ENCODE measurements at regions of chr6 and their contacts with region 1.

Region 1: DNA sequence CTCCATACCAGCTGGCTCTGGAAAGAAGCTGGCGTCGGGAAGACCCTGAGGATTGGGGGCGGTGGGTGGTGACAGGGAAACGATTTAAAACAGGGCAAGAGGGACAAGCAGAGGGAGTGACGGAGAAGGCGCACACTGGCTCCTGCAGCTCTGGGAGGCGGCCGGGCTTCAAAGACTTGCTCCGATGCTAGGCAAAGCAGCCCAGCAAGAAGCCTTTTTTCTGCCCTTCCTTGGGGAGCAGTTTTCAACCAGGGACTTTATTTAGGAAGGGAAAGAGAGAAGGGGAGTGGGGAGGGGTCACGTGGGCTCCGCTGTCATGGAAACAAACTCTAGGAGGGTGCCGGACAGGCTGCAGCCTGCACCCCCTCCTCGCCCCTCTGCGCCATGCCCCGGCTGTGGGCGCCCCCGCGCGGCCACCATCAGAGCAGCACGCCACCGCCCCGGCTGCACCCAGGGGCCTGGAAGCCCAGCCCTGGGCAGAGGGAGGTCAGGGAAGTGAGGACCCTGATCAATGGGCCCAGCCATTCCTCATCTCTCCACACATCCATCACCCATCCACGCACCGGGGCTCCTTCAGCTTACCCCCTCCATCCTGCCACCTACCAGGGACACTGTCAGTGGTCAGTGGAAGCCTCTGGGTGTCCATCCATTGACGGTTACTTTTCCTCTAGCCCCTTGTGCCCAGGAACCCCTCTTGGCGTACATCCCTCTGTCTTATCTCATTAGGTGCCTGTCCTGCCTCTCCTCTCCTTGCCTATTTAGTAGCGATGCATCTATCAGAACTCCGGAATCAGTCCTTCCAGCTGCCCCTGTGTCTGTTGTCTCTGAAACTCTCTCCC is 66.6 kb upstream of the CCDC167 start:
- DNase-seq: peak; percentile 64 to 74 (median 69)
- H3K4me3 ChIP-seq: peak overlapping the region in 1 of 2 donors; percentile 43
- H3K4me3 Mint-ChIP-seq: peak overlapping the region; percentile 46 to 77 (median 66)
- H3K27ac ChIP-seq: no peak overlapping the region
- H3K27ac Mint-ChIP-seq: peak overlapping the region in 6 of 7 donors; percentile 31 to 87 (median 70)
- H3K4me1 ChIP-seq: no peaks in the 10 kb centered on the region
- H3K4me1 Mint-ChIP-seq: peaks cover 0 to 10% (median 5%) of the 10 kb centered on the region in 4 donors
- H3K27me3 ChIP-seq: no peaks in the 10 kb centered on the region
- H3K27me3 Mint-ChIP-seq: no peaks in the 10 kb centered on the region

Region 2: DNA sequence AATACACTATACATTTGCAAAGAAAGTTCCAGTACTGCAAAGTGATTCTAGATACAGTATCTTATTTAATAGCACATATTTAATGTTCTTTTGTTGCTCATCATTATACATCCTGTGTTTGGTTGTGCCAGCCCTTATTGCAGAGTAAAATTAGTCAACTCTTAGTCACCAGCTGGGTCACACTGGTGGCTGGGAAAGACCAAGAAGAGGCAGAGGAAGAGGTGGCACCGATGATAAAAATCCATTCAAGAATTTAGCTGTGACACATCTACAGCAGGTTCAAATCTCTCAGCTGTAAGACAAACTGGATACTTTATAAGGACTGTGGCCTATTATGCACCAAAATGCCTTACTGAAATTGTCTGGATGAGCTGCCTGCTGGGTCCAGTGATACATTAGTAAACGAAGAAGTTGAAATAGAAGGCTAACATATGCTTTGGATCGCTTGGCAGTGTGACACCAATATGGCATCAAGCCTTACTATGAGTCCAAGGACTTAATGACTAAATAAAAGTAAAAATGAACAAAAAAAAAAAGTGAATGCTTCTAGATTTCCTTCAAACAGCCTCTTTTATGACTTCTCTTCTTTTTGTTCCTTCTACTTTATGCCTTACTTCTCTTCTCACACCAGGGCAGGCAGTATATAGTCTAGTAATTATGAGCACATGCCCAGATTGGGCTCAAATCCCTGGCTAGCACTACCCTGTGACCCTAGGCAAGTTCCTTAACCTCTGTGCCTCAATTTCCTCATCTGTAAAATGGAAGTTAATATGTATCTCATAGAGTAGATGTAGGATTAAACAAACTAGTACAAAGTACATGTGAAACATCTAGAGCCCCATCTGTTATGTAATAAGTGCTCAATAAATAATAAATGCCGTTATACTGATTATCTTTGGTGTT is 241.9 kb before region 1 on chr6:
- CTCF ChIA-PET with region 1: interaction called, 11 read pairs
- POLR2A ChIA-PET with region 1: no interaction called
- intact Hi-C with region 1: loop called (anchors 2 kb)
- DNase-seq: no peak
- H3K4me3 ChIP-seq: no peak overlapping the region
- H3K4me3 Mint-ChIP-seq: no peak overlapping the region
- H3K27ac ChIP-seq: no peak overlapping the region
- H3K27ac Mint-ChIP-seq: peak overlapping the region in 4 of 7 donors; percentile 10 to 70 (median 44)
- H3K4me1 ChIP-seq: no peaks in the 10 kb centered on the region
- H3K4me1 Mint-ChIP-seq: peaks cover 3 to 4% (median 4%) of the 10 kb centered on the region in 4 donors
- H3K27me3 ChIP-seq: no peaks in the 10 kb centered on the region
- H3K27me3 Mint-ChIP-seq: no peaks in the 10 kb centered on the region

Region 3: DNA sequence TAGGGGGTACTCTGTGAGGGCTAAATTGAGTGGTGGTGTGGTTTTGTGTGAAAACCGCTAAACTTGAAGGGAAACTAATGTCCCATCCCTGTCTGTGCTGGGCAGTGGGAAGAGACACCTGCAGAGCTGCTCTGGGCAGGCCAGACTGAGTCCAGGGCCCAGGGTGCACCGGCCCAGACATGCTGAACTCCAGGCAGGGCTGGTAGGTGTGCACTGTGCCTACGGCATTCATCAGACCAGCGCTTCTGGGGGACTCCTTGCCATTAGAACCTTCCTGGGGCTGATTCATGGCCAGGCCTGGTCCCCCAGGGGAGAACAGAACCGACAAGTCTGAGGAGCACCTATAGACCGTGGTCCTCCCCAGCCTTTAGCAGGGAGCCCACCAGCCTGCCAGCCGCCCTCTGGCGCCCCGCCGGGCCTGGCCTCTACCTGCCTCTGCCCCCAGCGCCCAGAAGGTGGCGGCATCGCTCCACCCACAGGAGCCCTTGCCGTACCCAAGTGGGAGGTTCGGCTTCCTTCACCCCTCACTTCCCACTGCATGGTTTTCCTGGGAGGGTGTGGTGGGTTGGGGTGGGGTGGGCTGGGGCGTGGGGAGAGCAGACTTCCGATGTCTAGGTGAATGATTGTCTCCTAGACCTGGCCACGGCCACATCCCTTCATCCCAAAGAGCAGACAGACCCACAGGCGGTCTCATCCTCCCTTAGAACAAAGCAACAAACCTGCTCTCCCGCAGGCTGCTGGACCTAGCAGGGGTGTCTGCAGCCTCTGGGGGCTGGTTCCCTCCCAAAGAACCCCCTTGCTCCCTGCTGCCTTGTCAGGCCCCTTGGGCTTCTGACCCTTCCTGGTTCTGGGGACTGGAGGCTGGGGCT is 82.2 kb before region 1 on chr6:
- CTCF ChIA-PET with region 1: interaction called, 131 read pairs
- POLR2A ChIA-PET with region 1: interaction called, 7 read pairs
- intact Hi-C with region 1: loop called (anchors 1 kb)
- DNase-seq: peak; percentile 74 to 81 (median 76)
- H3K4me3 ChIP-seq: no peak overlapping the region
- H3K4me3 Mint-ChIP-seq: no peak overlapping the region
- H3K27ac ChIP-seq: peak overlapping the region; percentile 30
- H3K27ac Mint-ChIP-seq: peak overlapping the region; percentile 15 to 97 (median 68)
- H3K4me1 ChIP-seq: peaks cover 34% of the 10 kb centered on the region
- H3K4me1 Mint-ChIP-seq: peaks cover 15 to 32% (median 24%) of the 10 kb centered on the region in 4 donors
- H3K27me3 ChIP-seq: no peaks in the 10 kb centered on the region
- H3K27me3 Mint-ChIP-seq: no peaks in the 10 kb centered on the region

Region 4: GRCh38 chr6:37499433-37500293 is 66.7 kb before region 1 on chr6 and contains the start of gene CCDC167:
- CTCF ChIA-PET with region 1: interaction called, 18 read pairs
- POLR2A ChIA-PET with region 1: interaction called, 5 read pairs
- intact Hi-C with region 1: no loop called
- DNase-seq: peak; percentile 92 to 98 (median 94)
- H3K4me3 ChIP-seq: peak within 1 kb of the TSS; percentile 80 to 90
- H3K4me3 Mint-ChIP-seq: peak within 1 kb of the TSS; percentile 95 to 99 (median 97)
- H3K27ac ChIP-seq: peak within 1 kb of the TSS; percentile 91
- H3K27ac Mint-ChIP-seq: peak within 1 kb of the TSS; percentile 98 to 100 (median 100)
- H3K4me1 ChIP-seq: peaks cover 90% of the 10 kb centered on the region
- H3K4me1 Mint-ChIP-seq: peaks cover 60 to 97% (median 82%) of the 10 kb centered on the region in 4 donors
- H3K27me3 ChIP-seq: no peaks in the 10 kb centered on the region
- H3K27me3 Mint-ChIP-seq: no peaks in the 10 kb centered on the region
- total RNA-seq, gene CCDC167: 25.1 to 27.8 TPM

Region 5: DNA sequence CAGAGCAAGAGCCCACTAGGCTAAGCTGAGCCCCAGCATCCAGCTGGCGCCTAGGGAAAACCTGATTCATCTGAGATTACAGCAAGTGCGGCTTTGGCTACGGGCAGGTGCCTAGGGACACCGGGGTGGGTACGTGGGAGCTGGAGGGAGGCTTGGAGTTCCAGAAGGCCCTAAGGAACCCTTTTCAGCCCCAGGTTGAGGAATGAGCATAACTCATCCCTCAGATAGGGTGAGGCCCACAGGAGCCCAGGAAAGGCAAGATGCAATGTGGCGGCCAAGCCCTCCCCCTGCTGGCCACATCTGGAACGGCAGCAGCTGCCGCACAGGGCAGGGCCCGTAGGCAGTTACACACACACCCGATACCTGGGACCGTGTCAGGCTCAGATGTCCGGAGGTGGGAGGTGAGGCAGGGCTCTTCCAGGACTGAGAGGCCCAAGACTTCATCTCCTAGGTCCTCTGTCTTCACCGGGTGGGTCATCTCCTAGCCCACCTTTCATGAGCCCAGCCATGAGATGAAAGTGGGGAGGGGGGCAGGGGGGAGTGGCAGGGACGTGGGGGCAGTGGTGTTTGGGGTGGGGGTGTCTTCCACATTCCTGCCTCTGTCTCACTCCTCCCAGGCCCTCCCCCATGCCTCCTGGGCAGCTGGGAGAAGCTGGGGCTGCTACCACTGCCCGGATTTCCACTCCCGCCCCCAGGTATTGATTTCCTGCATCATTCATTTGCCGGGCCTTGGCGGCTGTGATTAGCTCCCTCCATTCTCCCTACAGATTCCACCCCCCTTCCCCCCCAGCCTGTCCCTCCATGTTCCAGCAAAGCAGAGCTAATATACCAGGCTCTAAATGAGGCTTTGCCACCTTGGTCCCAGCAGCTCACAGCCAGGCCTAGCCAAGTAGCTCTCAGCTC is 125.8 kb after region 1 on chr6:
- CTCF ChIA-PET with region 1: interaction called, 21 read pairs
- POLR2A ChIA-PET with region 1: no interaction called
- intact Hi-C with region 1: loop called (anchors 1 kb)
- DNase-seq: peak; percentile 69 to 80 (median 73)
- H3K4me3 ChIP-seq: no peak overlapping the region
- H3K4me3 Mint-ChIP-seq: peak overlapping the region in 1 of 8 donors; percentile 30
- H3K27ac ChIP-seq: no peak overlapping the region
- H3K27ac Mint-ChIP-seq: peak overlapping the region in 1 of 7 donors; percentile 21
- H3K4me1 ChIP-seq: peaks cover 17% of the 10 kb centered on the region
- H3K4me1 Mint-ChIP-seq: peaks cover 12 to 53% (median 19%) of the 10 kb centered on the region in 4 donors
- H3K27me3 ChIP-seq: peaks cover 14% of the 10 kb centered on the region
- H3K27me3 Mint-ChIP-seq: no peaks in the 10 kb centered on the region

Region 6: DNA sequence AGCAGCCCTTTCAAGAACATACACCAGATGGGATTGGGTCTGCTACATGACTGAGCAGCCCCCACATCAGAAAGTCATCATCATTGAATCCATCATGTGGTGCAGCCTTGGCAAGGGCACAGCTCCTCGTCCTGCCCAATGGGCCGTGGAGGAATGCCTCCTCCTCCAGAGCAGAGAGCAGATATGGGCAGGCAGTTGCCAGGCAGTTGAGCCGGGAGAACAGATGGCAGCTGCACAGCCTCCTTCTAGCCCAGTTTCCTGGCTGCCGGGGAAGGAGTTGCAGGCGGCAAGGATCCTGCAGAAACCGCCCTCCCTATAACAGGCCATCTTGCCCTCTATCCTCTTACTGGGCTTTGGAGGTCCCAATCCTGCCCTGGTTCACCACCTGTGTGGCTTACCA is 241.3 kb after region 1 on chr6:
- CTCF ChIA-PET with region 1: no interaction called
- POLR2A ChIA-PET with region 1: no interaction called
- intact Hi-C with region 1: no loop called
- DNase-seq: no peak
- H3K4me3 ChIP-seq: no peak overlapping the region
- H3K4me3 Mint-ChIP-seq: no peak overlapping the region
- H3K27ac ChIP-seq: no peak overlapping the region
- H3K27ac Mint-ChIP-seq: no peak overlapping the region
- H3K4me1 ChIP-seq: no peaks in the 10 kb centered on the region
- H3K4me1 Mint-ChIP-seq: no peaks in the 10 kb centered on the region
- H3K27me3 ChIP-seq: no peaks in the 10 kb centered on the region
- H3K27me3 Mint-ChIP-seq: peaks cover 10 to 12% of the 10 kb centered on the region in 2 donors